ENCODE measurements at regions of chr17 and their contacts with region 1.

Region 1: GRCh38 chr17:41322094-41322902 is 6.8 kb upstream of the KRTAP17-1 start:
- ATAC-seq: peak in 4 of 8 experiments; percentile 46 to 83 (median 68)
- H3K4me3 ChIP-seq: no peak overlapping the region
- H3K27ac ChIP-seq: no peak overlapping the region
- H3K4me1 ChIP-seq: no peaks in the 10 kb centered on the region

Region 2: DNA sequence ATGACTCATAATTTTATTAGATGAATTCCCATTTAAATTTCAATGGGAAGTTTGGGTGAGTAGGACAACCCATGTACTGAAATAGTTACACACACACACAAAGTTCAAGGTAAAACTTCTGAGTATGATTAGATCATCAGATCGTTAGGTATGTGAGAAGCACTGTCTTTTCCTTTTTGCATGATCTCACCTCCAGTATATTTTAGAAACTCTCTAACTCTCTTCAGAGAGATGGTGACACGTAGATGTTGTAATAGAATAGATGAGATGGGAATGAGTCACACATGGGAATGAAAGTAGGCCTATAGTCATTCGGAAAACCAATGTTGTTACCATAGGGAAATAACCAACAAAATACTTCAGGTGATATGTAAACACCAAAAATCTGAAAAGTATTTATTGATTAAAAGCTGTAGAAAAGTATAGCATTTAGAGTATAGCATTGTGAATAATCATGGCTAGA is 407.1 kb before region 1 on chr17:
- in situ Hi-C with region 1: loop called in 2 of 9 experiments (anchors 10 to 25 kb)
- ATAC-seq: peak in 7 of 8 experiments; percentile 40 to 96 (median 88)
- H3K4me3 ChIP-seq: no peak overlapping the region
- H3K27ac ChIP-seq: no peak overlapping the region
- H3K4me1 ChIP-seq: no peaks in the 10 kb centered on the region

Measured in motor neuron (in vitro differentiated cells).